IMR-90 (cell line): ENCODE measurements at regions of chr11 and their contacts with region 1.

Region 1: DNA sequence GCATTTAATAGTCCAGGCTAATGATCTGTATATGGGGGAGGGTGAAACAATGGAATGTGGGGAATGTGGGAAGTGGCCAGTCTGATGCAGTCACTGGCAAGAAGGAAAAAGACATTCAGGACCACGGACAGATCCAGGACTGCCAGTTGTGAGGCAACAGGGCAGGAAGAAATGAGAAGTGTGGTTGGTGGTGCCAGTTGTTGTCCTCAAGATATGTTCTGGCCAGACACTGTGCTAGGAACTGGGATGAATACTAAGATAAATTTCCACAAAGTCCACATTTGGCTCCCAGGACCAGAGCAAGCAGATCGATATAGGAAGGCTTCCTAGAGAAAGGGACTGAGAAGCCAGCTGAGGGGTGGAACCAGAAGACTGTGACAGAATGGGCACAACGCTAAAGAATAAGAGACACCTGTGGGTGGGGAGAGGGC is 6.8 kb upstream of the TPBGL start:
- DNase-seq: peak; percentile 54
- ATAC-seq: peak; percentile 79
- H3K4me3 ChIP-seq: no peak overlapping the region
- H3K27ac ChIP-seq: no peak overlapping the region
- H3K4me1 ChIP-seq: no peaks in the 10 kb centered on the region
- H3K27me3 ChIP-seq: peaks cover 25% of the 10 kb centered on the region
- CTCF ChIP-seq: no peak
- POLR2A ChIP-seq: no peak
- RAD21 ChIP-seq: no peak

Region 2: GRCh38 chr11:75214411-75214821 is 19.3 kb before region 1 on chr11:
- CTCF ChIA-PET with region 1: no interaction called
- POLR2A ChIA-PET with region 1: no interaction called
- dilution Hi-C with region 1: no loop called
- in situ Hi-C with region 1: no loop called
- intact Hi-C with region 1: loop called (anchors 1 kb)
- DNase-seq: peak; percentile 72
- ATAC-seq: peak; percentile 95
- H3K4me3 ChIP-seq: no peak overlapping the region
- H3K27ac ChIP-seq: no peak overlapping the region
- H3K4me1 ChIP-seq: no peaks in the 10 kb centered on the region
- H3K27me3 ChIP-seq: peaks cover 11% of the 10 kb centered on the region
- CTCF ChIP-seq: peak; percentile 41
- POLR2A ChIP-seq: no peak
- RAD21 ChIP-seq: peak; percentile 38